CD4-positive, alpha-beta memory T cell (primary cell): ENCODE measurements at regions of chr7 and their contacts with region 1.

Region 1: GRCh38 chr7:140653319-140654108 is 12.9 kb upstream of the DENND2A start:
- DNase-seq: peak in 4 of 5 donors; percentile 40 to 57 (median 45)
- H3K4me3 ChIP-seq: no peak overlapping the region
- H3K4me3 Mint-ChIP-seq: peak overlapping the region in 2 of 8 donors; percentile 24 to 39
- H3K27ac ChIP-seq: no peak overlapping the region
- H3K27ac Mint-ChIP-seq: no peak overlapping the region
- H3K4me1 ChIP-seq: peaks cover 17% of the 10 kb centered on the region
- H3K4me1 Mint-ChIP-seq: peaks cover 18 to 24% (median 20%) of the 10 kb centered on the region in 4 donors
- H3K27me3 ChIP-seq: no peaks in the 10 kb centered on the region
- H3K27me3 Mint-ChIP-seq: peaks cover 3 to 12% of the 10 kb centered on the region in 2 donors

Region 2: GRCh38 chr7:140517546-140518369 is 135.8 kb before region 1 on chr7:
- CTCF ChIA-PET with region 1: interaction called, 7 read pairs
- POLR2A ChIA-PET with region 1: no interaction called
- intact Hi-C with region 1: loop called (anchors 1 kb)
- DNase-seq: peak; percentile 49 to 60 (median 54)
- H3K4me3 ChIP-seq: no peak overlapping the region
- H3K4me3 Mint-ChIP-seq: peak overlapping the region in 1 of 8 donors; percentile 65
- H3K27ac ChIP-seq: no peak overlapping the region
- H3K27ac Mint-ChIP-seq: no peak overlapping the region
- H3K4me1 ChIP-seq: peaks cover 4% of the 10 kb centered on the region
- H3K4me1 Mint-ChIP-seq: peaks cover 0 to 7% (median 3%) of the 10 kb centered on the region in 4 donors
- H3K27me3 ChIP-seq: no peaks in the 10 kb centered on the region
- H3K27me3 Mint-ChIP-seq: peaks cover 1 to 5% of the 10 kb centered on the region in 2 donors